CD8-positive, alpha-beta T cell (primary cell): ENCODE measurements at regions of chr9 and their contacts with region 1.

Region 1: DNA sequence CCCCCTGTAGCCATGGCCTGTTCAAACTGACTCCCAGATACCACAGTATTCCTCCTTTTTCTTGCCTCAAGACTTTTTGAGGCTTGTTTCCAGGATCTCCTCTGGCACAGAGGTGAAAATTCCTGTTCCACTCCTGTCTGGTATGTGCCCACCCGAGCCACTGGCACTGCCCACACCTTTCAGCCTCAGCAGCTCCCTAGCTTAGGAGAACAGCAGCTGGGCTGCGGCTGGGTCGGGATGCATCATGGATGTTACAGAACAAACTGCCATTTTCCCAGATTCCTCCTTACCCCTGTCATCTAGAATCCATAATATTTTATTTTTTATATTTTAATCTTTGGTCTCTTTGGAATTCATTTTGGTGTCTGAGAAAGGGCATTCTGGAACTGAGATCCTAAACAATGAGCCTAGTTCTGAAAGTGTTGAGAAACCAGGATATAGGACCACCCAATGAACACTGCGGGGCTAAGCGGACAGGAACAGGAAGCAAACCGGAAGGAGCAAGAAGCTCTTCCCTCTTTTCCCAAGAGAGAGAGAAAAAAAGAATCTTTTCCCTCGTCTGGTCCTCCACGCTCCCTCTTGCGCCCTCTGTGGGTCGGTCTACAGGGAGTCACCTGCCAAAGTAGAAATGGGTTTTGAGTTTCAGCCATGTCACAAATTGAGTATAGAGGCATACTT is 12.5 kb downstream of the OR2S2 start:
- DNase-seq: peak; percentile 27 to 72 (median 62)
- ATAC-seq: peak; percentile 70
- H3K4me3 ChIP-seq: no peak overlapping the region
- H3K4me3 Mint-ChIP-seq: no peak overlapping the region
- H3K27ac ChIP-seq: no peak overlapping the region
- H3K27ac Mint-ChIP-seq: no peak overlapping the region
- H3K4me1 ChIP-seq: peaks cover 30% of the 10 kb centered on the region
- H3K4me1 Mint-ChIP-seq: peaks cover 48% of the 10 kb centered on the region
- H3K27me3 ChIP-seq: no peaks in the 10 kb centered on the region
- H3K27me3 Mint-ChIP-seq: no peaks in the 10 kb centered on the region
- CTCF ChIP-seq: peak; percentile 80

Region 2: DNA sequence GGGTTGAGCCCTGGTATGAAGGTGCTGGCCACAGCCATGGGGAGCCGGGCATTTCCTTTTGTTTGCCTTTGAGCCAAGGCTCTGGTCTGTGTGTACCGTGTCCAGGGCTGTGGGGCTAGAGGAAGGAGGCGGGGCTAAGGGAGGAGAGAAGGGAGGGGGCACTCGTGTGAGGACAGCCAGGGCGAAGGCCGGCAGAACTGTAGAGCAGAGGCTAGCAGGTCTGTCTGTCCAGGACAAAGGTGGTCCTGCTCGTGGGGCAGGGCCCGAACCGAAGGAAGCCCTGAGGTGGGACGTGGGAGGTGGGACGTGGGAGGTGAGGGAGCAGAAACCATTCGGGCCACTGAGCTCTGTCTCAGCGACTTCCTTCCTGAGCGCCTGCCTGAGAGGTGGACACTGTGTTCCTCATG is 381.7 kb before region 1 on chr9:
- CTCF ChIA-PET with region 1: no interaction called
- POLR2A ChIA-PET with region 1: no interaction called
- intact Hi-C with region 1: no loop called
- DNase-seq: no peak
- ATAC-seq: no peak
- H3K4me3 ChIP-seq: no peak overlapping the region
- H3K4me3 Mint-ChIP-seq: no peak overlapping the region
- H3K27ac ChIP-seq: no peak overlapping the region
- H3K27ac Mint-ChIP-seq: no peak overlapping the region
- H3K4me1 ChIP-seq: no peaks in the 10 kb centered on the region
- H3K4me1 Mint-ChIP-seq: no peaks in the 10 kb centered on the region
- H3K27me3 ChIP-seq: no peaks in the 10 kb centered on the region
- H3K27me3 Mint-ChIP-seq: no peaks in the 10 kb centered on the region
- CTCF ChIP-seq: no peak

Region 3: GRCh38 chr9:35891646-35892045 is 53.8 kb before region 1 on chr9:
- CTCF ChIA-PET with region 1: interaction called, 10 read pairs
- POLR2A ChIA-PET with region 1: no interaction called
- intact Hi-C with region 1: no loop called
- DNase-seq: no peak
- ATAC-seq: no peak
- H3K4me3 ChIP-seq: no peak overlapping the region
- H3K4me3 Mint-ChIP-seq: no peak overlapping the region
- H3K27ac ChIP-seq: no peak overlapping the region
- H3K27ac Mint-ChIP-seq: no peak overlapping the region
- H3K4me1 ChIP-seq: no peaks in the 10 kb centered on the region
- H3K4me1 Mint-ChIP-seq: no peaks in the 10 kb centered on the region
- H3K27me3 ChIP-seq: peaks cover 0 to 9% of the 10 kb centered on the region in 2 experiments
- H3K27me3 Mint-ChIP-seq: peaks cover 24% of the 10 kb centered on the region
- CTCF ChIP-seq: no peak

Region 4: DNA sequence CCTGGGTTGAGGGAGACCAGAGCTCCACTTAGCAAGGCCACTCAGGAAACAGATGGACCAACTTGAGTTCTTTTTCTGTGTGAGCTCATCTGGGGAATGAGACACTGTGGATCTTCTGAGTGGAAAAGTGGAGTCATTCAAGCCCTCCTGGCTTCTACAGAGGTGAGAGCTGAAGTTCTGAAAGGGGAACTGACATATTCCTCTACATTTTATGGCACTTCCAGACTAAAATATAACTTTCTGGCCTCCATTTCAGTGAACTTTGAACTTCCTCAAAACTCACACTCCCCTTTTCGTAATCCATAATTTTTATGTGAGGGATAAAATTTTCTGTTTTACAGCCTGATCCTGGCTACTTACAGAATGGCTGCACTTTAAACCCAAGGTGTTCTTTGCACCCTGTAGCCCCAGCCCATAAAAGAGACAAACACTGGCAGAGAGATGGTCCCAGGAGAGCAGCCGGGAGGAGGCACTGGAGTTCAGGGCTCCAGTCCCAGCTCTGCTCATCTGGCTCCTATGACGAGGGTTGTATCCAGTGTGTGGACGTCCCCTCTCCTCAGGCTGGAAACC is 25.3 kb before region 1 on chr9:
- CTCF ChIA-PET with region 1: interaction called, 13 read pairs
- POLR2A ChIA-PET with region 1: no interaction called
- intact Hi-C with region 1: no loop called
- DNase-seq: no peak
- ATAC-seq: no peak
- H3K4me3 ChIP-seq: no peak overlapping the region
- H3K4me3 Mint-ChIP-seq: no peak overlapping the region
- H3K27ac ChIP-seq: no peak overlapping the region
- H3K27ac Mint-ChIP-seq: no peak overlapping the region
- H3K4me1 ChIP-seq: no peaks in the 10 kb centered on the region
- H3K4me1 Mint-ChIP-seq: peaks cover 3% of the 10 kb centered on the region
- H3K27me3 ChIP-seq: no peaks in the 10 kb centered on the region
- H3K27me3 Mint-ChIP-seq: no peaks in the 10 kb centered on the region
- CTCF ChIP-seq: no peak

Region 5: DNA sequence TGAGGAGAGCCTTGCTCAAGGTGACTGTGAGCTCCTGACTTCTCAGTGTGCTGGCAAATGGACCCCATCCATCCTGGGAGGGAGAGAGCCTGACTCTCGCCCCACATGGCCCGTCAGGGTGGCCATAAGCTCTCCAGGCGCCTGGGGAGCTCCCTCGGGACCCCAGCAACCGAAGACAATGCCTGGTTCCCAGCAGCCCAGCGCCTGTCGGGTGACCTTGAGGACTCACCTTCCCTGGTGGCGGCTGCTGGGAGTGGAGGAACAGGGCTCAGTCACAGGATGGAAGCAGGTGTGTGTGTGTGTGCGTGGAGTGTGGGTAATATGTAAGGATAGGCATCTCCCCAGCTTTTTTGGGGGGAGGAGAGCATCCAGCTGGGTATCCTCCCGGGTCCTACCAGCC is 817.5 kb after region 1 on chr9:
- CTCF ChIA-PET with region 1: no interaction called
- POLR2A ChIA-PET with region 1: no interaction called
- intact Hi-C with region 1: no loop called
- DNase-seq: no peak
- ATAC-seq: no peak
- H3K4me3 ChIP-seq: no peak overlapping the region
- H3K4me3 Mint-ChIP-seq: no peak overlapping the region
- H3K27ac ChIP-seq: no peak overlapping the region
- H3K27ac Mint-ChIP-seq: no peak overlapping the region
- H3K4me1 ChIP-seq: peaks cover 6% of the 10 kb centered on the region
- H3K4me1 Mint-ChIP-seq: peaks cover 6% of the 10 kb centered on the region
- H3K27me3 ChIP-seq: peaks cover 0 to 10% of the 10 kb centered on the region in 2 experiments
- H3K27me3 Mint-ChIP-seq: peaks cover 20% of the 10 kb centered on the region
- CTCF ChIP-seq: no peak